ENCODE measurements at regions of chr10 and their contacts with region 1.

Region 1: DNA sequence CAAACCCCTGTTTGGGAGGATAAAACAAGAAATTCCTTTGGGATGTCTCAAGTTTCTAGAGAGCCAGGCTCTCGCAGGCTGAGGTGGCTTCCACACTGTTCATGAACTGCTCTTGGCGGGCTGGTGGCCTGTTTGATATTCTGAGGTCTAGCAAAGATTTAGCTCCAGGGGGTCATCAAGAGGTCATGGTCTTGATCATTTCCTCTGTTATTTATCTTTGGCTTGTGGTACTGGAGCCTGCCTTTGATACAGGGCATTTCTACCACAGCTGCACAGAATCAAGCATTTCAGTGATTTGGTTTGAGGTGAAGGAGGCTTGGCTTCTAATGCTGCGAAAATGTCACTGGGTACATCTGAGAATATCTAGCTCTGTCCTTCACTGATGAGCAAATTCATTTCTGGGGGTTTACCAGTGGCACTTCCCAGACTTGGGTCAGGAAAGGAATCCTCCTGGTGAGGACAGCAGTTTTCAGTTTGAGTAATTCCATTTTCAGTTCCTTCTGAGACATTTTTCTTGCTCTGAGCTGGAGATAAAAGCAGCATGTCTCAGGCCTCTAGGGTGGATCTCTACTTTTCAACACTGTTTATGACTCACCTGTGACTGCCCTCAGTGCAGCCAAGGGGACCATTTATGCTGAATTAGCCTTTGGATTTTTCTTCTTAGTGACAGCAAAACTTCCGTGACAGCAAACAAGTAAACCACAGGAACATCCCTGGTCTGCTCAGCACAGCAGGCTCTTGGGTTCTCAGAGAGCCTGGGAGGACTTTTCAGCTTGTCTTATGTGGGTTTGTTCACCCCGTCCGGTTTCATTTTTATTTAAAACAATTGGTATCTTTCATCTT is 312.0 kb downstream of the RNLS start:
- DNase-seq: peak; percentile 67
- H3K4me3 Mint-ChIP-seq: no peak overlapping the region
- H3K27ac Mint-ChIP-seq: peak overlapping the region; percentile 74
- H3K4me1 Mint-ChIP-seq: peaks cover 60% of the 10 kb centered on the region
- H3K27me3 Mint-ChIP-seq: peaks cover 22% of the 10 kb centered on the region

Region 2: GRCh38 chr10:87817609-87818504 is 453.2 kb before region 1 on chr10 and contains the start of gene ATAD1:
- intact Hi-C with region 1: loop called (anchors 5 kb)
- DNase-seq: peak; percentile 88
- H3K4me3 Mint-ChIP-seq: peak within 1 kb of the TSS; percentile 84
- H3K27ac Mint-ChIP-seq: peak within 1 kb of the TSS; percentile 85
- H3K4me1 Mint-ChIP-seq: peaks cover 29% of the 10 kb centered on the region
- H3K27me3 Mint-ChIP-seq: peaks cover 3% of the 10 kb centered on the region
- total RNA-seq, gene ATAD1: 43.4 and 50.2 TPM in 2 replicates

Region 3: DNA sequence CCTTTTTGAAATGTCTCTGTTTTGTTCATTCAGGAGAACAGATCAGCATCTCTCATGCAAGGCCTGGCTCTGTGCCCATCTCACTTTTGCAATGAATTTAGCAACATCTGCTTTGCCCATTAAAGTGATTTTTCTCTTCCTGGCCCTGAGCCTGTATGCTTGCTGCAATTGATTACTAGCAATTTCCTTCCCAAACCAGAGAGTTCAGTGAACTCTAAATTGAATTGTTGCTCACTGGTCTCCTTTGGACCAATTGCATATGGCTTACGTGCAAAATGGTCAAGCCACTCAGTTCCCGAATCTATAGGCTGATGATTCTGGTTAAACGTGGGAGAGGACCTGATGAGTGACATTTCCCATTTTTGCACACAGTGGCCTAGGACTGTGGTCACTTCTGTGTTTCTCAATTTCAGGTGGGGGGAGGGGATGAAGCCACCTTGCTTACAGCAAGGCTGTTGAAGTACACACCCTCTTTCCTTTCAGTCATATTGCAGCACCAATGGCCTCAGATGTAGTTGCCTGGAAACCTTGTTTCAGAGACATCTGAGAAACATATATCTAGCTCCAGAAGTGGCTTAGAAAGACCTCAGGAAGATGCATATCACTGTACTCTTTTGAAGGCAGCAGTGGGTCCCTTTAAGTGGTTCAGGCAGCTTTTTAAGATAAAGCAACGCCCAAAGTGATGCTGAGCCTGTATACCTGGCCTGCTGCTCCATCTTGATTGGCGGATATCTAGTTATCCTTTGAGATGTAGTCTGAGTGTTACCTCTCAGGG is 206.3 kb before region 1 on chr10:
- intact Hi-C with region 1: loop called (anchors 1 kb)
- DNase-seq: no peak
- H3K4me3 Mint-ChIP-seq: no peak overlapping the region
- H3K27ac Mint-ChIP-seq: peak overlapping the region; percentile 18
- H3K4me1 Mint-ChIP-seq: peaks cover 39% of the 10 kb centered on the region
- H3K27me3 Mint-ChIP-seq: peaks cover 11% of the 10 kb centered on the region

Region 4: GRCh38 chr10:88138319-88138848 is 132.7 kb before region 1 on chr10:
- intact Hi-C with region 1: loop called (anchors 1 kb)
- DNase-seq: no peak
- H3K4me3 Mint-ChIP-seq: no peak overlapping the region
- H3K27ac Mint-ChIP-seq: no peak overlapping the region
- H3K4me1 Mint-ChIP-seq: peaks cover 24% of the 10 kb centered on the region
- H3K27me3 Mint-ChIP-seq: peaks cover 22% of the 10 kb centered on the region

Region 5: DNA sequence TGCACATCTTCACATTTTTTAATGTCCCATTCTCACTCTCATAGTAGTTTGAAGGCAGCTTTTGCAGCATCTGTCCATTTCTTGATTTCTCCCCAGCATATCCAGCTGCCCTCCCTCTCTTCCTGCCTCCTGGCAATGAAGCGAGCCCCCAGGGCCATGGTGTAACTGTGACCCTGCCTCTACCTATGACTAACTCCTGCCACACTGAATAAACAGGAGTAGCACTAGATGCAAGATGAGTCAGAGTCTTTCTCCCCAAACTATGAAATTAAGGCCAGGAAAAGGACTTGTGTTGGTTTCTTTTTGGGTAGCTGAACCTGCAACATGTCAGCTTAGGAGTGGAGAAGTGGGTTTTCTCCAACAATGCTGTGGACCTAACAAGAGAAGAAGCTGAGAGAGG is 17.0 kb before region 1 on chr10:
- intact Hi-C with region 1: loop called (anchors 2 kb)
- DNase-seq: no peak
- H3K4me3 Mint-ChIP-seq: no peak overlapping the region
- H3K27ac Mint-ChIP-seq: no peak overlapping the region
- H3K4me1 Mint-ChIP-seq: peaks cover 8% of the 10 kb centered on the region
- H3K27me3 Mint-ChIP-seq: peaks cover 9% of the 10 kb centered on the region

Region 6: DNA sequence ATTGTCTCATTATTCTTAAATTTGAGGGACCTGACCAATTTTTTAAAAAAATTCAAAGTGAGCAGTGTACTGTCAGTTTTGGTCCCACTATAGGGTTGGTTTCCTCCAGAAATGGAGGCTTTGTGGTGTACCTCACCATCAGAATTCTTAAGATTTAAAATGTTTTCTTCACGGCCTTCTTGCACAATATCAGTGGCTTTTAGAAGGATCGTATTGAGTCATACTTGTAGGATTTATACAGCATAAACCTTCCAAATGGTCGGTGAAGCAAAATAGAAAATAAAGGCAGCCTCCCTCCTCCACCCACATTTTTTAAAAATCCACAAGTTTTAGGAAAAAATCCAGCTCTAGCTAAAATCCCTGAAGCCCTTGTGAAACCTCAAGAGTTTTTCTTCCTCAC is 185.6 kb after region 1 on chr10:
- intact Hi-C with region 1: no loop called
- DNase-seq: no peak
- H3K4me3 Mint-ChIP-seq: no peak overlapping the region
- H3K27ac Mint-ChIP-seq: no peak overlapping the region
- H3K4me1 Mint-ChIP-seq: peaks cover under 1% of the 10 kb centered on the region
- H3K27me3 Mint-ChIP-seq: peaks cover 21% of the 10 kb centered on the region

Region 7: DNA sequence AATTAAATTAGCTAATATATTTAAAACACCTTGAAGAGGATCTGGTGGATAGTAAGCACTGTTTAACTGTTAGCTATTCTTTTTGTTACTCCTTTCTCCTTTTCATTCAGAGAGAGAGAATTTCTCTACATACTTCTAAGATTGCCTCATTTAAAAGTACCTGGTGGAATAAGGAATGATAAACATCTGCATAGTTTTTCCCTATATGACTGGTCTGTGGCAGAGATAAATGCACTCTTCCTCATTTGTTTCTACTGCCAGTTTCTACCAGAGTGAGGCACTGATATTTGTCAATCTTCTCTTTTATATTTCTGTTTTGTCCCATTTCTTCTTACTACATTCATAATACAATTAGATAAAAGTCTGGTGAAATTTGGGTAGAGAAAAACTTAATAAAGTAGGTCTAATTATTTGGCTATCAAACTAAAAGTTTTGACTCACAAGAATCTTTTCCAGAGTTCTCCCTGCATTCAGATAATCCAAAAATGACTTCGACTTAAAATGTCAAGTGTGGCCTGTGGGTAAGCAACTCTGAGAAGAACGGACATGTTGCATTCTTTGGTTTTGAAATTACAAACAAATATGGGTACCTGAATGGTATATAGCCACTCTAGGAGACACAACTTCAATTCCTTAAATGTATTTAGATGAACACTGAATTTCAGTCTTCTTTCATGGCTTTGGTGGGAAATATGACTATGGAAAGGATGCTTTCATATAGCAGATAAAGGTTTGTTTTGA is 273.2 kb after region 1 on chr10:
- intact Hi-C with region 1: loop called (anchors 1 kb)
- DNase-seq: no peak
- H3K4me3 Mint-ChIP-seq: no peak overlapping the region
- H3K27ac Mint-ChIP-seq: no peak overlapping the region
- H3K4me1 Mint-ChIP-seq: peaks cover 24% of the 10 kb centered on the region
- H3K27me3 Mint-ChIP-seq: peaks cover 15% of the 10 kb centered on the region

Measured in activated T-helper 2 cell treated with anti-CD3 and anti-CD28 coated beads, Interferon-gamma antibody, Interleukin-2, Interleukin-4, amounts not matched to agents 10 μg/mL and 5 μg/mL and 100 μg/mL, durations not matched to agents 14 hours and 24 hours and 36 hours (primary cell).